CD4-positive, alpha-beta memory T cell (primary cell): ENCODE measurements at regions of chr1 and their contacts with region 1.

Region 1: GRCh38 chr1:40438391-40439015 is 11.8 kb upstream of the ZFP69B start:
- DNase-seq: peak in 4 of 5 donors; percentile 19 to 44 (median 28)
- H3K4me3 ChIP-seq: no peak overlapping the region
- H3K4me3 Mint-ChIP-seq: no peak overlapping the region
- H3K27ac ChIP-seq: no peak overlapping the region
- H3K27ac Mint-ChIP-seq: no peak overlapping the region
- H3K4me1 ChIP-seq: no peaks in the 10 kb centered on the region
- H3K4me1 Mint-ChIP-seq: peaks cover 0 to 3% (median under 1%) of the 10 kb centered on the region in 4 donors
- H3K27me3 ChIP-seq: no peaks in the 10 kb centered on the region
- H3K27me3 Mint-ChIP-seq: no peaks in the 10 kb centered on the region

Region 2: DNA sequence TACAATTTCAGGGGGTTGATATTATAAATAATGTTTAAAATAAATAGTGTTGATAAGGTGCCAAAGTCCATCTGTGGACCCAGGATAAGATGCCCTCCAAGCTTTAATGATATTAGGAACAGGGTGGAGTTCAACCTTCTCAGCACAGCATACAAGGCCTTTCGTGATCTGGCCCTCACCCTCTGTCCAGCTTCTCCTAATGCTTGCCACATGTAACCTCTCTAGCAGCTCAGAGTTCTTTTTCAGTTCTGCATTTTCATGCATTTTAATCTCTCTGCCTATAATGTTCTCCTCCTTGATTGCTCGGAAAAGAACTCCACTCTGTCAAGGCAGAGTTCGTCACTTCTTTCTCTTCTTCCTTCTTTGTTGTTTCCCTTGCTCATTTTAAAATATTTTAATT is 86.4 kb before region 1 on chr1:
- CTCF ChIA-PET with region 1: no interaction called
- POLR2A ChIA-PET with region 1: no interaction called
- intact Hi-C with region 1: no loop called
- DNase-seq: no peak
- H3K4me3 ChIP-seq: no peak overlapping the region
- H3K4me3 Mint-ChIP-seq: no peak overlapping the region
- H3K27ac ChIP-seq: no peak overlapping the region
- H3K27ac Mint-ChIP-seq: no peak overlapping the region
- H3K4me1 ChIP-seq: no peaks in the 10 kb centered on the region
- H3K4me1 Mint-ChIP-seq: peaks cover 0 to 1% (median 0%) of the 10 kb centered on the region in 4 donors
- H3K27me3 ChIP-seq: no peaks in the 10 kb centered on the region
- H3K27me3 Mint-ChIP-seq: no peaks in the 10 kb centered on the region

Region 3: GRCh38 chr1:40411294-40411693 is 27.2 kb before region 1 on chr1:
- CTCF ChIA-PET with region 1: interaction called, 17 read pairs
- POLR2A ChIA-PET with region 1: no interaction called
- intact Hi-C with region 1: no loop called
- DNase-seq: no peak
- H3K4me3 ChIP-seq: no peak overlapping the region
- H3K4me3 Mint-ChIP-seq: no peak overlapping the region
- H3K27ac ChIP-seq: no peak overlapping the region
- H3K27ac Mint-ChIP-seq: peak overlapping the region in 2 of 7 donors; percentile 46
- H3K4me1 ChIP-seq: no peaks in the 10 kb centered on the region
- H3K4me1 Mint-ChIP-seq: peaks cover 13 to 48% (median 27%) of the 10 kb centered on the region in 4 donors
- H3K27me3 ChIP-seq: no peaks in the 10 kb centered on the region
- H3K27me3 Mint-ChIP-seq: no peaks in the 10 kb centered on the region

Region 4: GRCh38 chr1:40423264-40423642 is 15.2 kb before region 1 on chr1:
- CTCF ChIA-PET with region 1: interaction called, 26 read pairs
- POLR2A ChIA-PET with region 1: no interaction called
- intact Hi-C with region 1: no loop called
- DNase-seq: no peak
- H3K4me3 ChIP-seq: no peak overlapping the region
- H3K4me3 Mint-ChIP-seq: no peak overlapping the region
- H3K27ac ChIP-seq: no peak overlapping the region
- H3K27ac Mint-ChIP-seq: peak overlapping the region in 3 of 7 donors; percentile 32 to 75 (median 47)
- H3K4me1 ChIP-seq: no peaks in the 10 kb centered on the region
- H3K4me1 Mint-ChIP-seq: peaks cover 6 to 13% (median 9%) of the 10 kb centered on the region in 4 donors
- H3K27me3 ChIP-seq: no peaks in the 10 kb centered on the region
- H3K27me3 Mint-ChIP-seq: no peaks in the 10 kb centered on the region